Endothelial cell of umbilical vein (primary cell): ENCODE measurements at regions of chr1 and their contacts with region 1.

Region 1: GRCh38 chr1:185156854-185157598 is at the starts of genes SWT1 and TRMT1L:
- DNase-seq: peak; percentile 100
- H3K4me3 ChIP-seq: peak within 1 kb of the TSS; percentile 60 to 95 (median 92)
- H3K27ac ChIP-seq: peak within 1 kb of the TSS; percentile 85
- H3K4me1 ChIP-seq: peaks cover 19% of the 10 kb centered on the region
- H3K27me3 ChIP-seq: no peaks in the 10 kb centered on the region
- CTCF ChIP-seq: no peak
- POLR2A ChIP-seq: peak; percentile 88
- total RNA-seq, gene SWT1: 3.6 and 4.3 TPM in 2 replicates
- total RNA-seq, gene TRMT1L: 12.8 and 16.1 TPM in 2 replicates

Region 2: DNA sequence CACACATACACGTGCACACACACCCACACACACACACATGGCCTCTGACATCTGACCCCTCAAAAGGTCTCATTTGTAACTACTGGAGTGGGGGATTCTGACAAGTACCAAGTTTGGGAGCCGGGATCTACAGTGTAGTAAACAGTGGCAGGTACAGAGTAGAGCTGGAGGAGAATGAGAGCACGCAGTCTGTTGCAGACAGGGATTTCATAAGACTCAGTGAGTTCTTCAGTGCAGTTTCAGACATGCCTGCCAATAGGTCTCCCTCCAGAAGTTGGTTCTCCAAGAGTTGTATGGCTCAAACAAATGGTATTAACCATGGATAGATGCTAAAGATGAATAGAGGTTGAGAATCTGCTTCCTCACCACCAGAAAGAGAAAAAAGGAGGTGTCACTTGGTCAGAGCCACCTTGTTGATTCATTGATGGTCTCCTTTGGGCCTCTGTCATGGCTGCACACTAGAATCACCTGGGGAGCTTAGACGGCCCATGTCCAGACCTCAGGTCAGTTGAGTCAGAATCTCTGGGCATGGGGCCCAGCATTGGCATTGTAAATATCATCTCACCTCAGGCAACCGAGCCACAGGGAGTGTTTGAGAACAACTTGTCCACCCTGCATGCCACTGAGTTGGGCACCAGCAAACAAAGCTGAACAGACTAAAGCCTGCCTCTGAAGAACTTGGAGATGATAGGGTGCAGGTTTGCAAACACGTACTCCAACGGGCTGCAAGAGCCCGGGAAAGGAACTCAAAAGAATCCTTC is 524.4 kb before region 1 on chr1:
- CTCF ChIA-PET with region 1: no interaction called
- POLR2A ChIA-PET with region 1: no interaction called
- dilution Hi-C with region 1: no loop called
- intact Hi-C with region 1: no loop called
- DNase-seq: no peak
- H3K4me3 ChIP-seq: no peak overlapping the region
- H3K27ac ChIP-seq: no peak overlapping the region
- H3K4me1 ChIP-seq: no peaks in the 10 kb centered on the region
- H3K27me3 ChIP-seq: no peaks in the 10 kb centered on the region
- CTCF ChIP-seq: no peak
- POLR2A ChIP-seq: no peak

Region 3: DNA sequence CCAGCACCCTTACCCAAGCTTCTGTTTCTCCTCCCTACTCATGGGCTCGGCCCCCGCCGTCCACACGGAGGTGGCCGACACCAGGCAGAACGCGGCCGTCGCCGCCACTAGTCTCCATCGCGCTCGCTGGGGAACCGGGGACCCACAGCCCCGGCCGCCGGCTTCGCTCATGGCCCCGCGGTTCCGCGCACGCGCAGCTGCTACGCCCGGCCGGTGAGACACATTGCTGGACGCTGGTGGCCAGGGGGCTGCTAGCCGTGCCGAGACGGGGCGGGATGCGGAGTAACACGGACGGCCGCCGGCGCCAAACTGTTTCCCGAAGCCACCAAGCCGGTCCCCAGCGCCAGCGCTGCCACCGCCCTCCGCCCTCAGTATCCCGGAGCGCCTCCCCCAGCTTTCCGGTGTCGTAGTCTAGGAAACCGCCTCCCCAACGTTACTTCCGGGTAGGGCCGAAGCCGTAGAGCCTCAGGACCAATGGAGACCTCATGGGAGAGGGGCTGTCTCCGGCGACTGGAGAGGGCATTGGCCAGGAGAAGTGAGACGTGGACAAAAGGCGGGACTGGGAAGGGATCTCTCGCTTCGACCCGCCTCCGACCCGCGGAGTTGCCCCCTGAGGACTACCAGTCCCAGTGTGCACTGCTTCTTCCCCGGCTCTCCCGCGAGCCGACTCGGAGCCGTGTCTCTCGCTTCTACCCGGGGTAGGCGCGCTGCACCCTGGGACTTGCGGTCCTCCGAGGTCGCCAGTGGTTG is 402.4 kb before region 1 on chr1 and contains the start of gene EDEM3:
- CTCF ChIA-PET with region 1: interaction called, 3 read pairs
- POLR2A ChIA-PET with region 1: no interaction called
- dilution Hi-C with region 1: no loop called
- intact Hi-C with region 1: loop called (anchors 1 kb)
- DNase-seq: peak; percentile 99
- H3K4me3 ChIP-seq: peak within 1 kb of the TSS; percentile 59 to 83 (median 81)
- H3K27ac ChIP-seq: peak within 1 kb of the TSS; percentile 76
- H3K4me1 ChIP-seq: peaks cover 16% of the 10 kb centered on the region
- H3K27me3 ChIP-seq: peaks cover 0 to 3% of the 10 kb centered on the region in 2 experiments
- CTCF ChIP-seq: no peak
- POLR2A ChIP-seq: peak; percentile 93
- total RNA-seq, gene EDEM3: 26.3 and 33.5 TPM in 2 replicates

Region 4: GRCh38 chr1:184771190-184771691 is 385.8 kb before region 1 on chr1:
- CTCF ChIA-PET with region 1: no interaction called
- POLR2A ChIA-PET with region 1: no interaction called
- dilution Hi-C with region 1: no loop called
- intact Hi-C with region 1: no loop called
- DNase-seq: no peak
- H3K4me3 ChIP-seq: no peak overlapping the region
- H3K27ac ChIP-seq: no peak overlapping the region
- H3K4me1 ChIP-seq: no peaks in the 10 kb centered on the region
- H3K27me3 ChIP-seq: peaks cover 4 to 10% of the 10 kb centered on the region in 2 experiments
- CTCF ChIP-seq: no peak
- POLR2A ChIP-seq: no peak

Region 5: GRCh38 chr1:184792450-184792969 is 364.5 kb before region 1 on chr1:
- CTCF ChIA-PET with region 1: no interaction called
- POLR2A ChIA-PET with region 1: no interaction called
- dilution Hi-C with region 1: no loop called
- intact Hi-C with region 1: loop called (anchors 1 kb)
- DNase-seq: peak; percentile 90
- H3K4me3 ChIP-seq: no peak overlapping the region
- H3K27ac ChIP-seq: peak overlapping the region; percentile 96
- H3K4me1 ChIP-seq: peaks cover 22% of the 10 kb centered on the region
- H3K27me3 ChIP-seq: no peaks in the 10 kb centered on the region
- CTCF ChIP-seq: no peak
- POLR2A ChIP-seq: no peak

Region 6: DNA sequence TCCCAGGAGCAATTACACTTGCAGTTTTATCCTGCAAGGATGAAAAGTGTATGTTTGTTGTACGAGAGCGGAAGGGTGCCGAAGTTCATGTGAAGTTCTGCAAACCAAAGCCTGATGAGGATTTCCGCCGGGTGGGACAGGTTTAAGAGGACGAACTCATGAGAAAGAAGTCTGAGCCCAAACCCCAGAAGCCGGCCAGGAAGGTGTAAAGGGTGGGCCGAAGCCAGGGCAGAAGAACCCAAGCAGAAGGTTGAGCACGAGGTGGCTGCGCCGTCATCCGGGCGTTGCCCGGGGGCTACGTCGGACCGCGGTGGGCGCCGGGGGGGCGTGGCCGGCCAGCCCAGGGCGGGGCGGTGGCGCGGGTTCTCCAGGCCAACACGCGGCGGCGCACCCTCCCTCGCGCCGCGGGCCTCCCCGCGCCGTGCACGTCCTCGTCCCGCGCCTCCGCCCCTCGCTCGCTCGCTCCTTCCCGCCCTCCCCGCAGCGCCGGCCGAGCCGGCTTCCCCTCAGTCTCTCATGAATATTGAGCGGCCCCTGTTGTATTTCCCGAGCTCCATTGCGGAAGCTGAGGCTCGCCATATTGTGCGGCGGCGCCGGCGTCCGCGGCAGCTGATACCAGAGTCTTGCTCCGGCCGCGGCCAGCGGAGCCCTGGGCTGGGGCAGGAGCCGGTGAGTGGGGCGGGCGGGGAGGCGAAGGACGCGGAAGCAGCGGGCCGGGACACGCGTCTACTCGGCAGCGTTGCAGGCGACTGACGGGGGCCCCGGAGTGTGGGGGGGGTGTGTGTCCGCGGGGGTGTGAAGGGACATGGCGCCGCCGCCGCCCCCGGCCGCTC is 111.8 kb before region 1 on chr1 and contains the start of gene RNF2:
- CTCF ChIA-PET with region 1: no interaction called
- POLR2A ChIA-PET with region 1: interaction called, 3 read pairs
- dilution Hi-C with region 1: no loop called
- intact Hi-C with region 1: loop called (anchors 1 kb)
- DNase-seq: peak; percentile 86
- H3K4me3 ChIP-seq: peak within 1 kb of the TSS; percentile 71 to 96 (median 74)
- H3K27ac ChIP-seq: peak within 1 kb of the TSS; percentile 9
- H3K4me1 ChIP-seq: peaks cover 12% of the 10 kb centered on the region
- H3K27me3 ChIP-seq: no peaks in the 10 kb centered on the region
- CTCF ChIP-seq: no peak
- POLR2A ChIP-seq: peak; percentile 59
- total RNA-seq, gene RNF2: 26.0 and 30.6 TPM in 2 replicates

Region 7: DNA sequence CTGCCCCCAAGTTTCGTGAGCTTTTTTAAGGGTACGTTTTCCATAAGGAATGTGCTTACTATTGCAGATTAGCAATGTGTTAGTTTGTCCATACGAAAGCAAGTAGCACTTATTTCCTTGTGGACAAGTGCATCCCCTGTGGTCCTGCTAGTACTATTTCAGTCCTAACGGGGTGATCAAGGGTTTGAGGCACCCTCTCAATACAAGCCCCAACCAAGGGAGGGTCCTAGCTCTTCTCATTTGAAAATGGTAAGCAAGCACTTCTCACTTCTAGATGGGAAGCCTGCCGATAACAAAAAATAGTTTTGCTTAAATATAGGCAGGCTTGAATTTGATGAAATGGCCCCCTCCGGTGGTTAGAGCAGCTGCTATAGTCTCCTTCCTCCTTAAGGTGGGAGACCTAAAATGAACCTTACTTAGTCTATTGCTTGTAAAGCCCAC is 513.2 kb after region 1 on chr1:
- CTCF ChIA-PET with region 1: no interaction called
- POLR2A ChIA-PET with region 1: no interaction called
- dilution Hi-C with region 1: no loop called
- intact Hi-C with region 1: loop called (anchors 5 kb)
- DNase-seq: peak; percentile 74
- H3K4me3 ChIP-seq: no peak overlapping the region
- H3K27ac ChIP-seq: no peak overlapping the region
- H3K4me1 ChIP-seq: peaks cover 17% of the 10 kb centered on the region
- H3K27me3 ChIP-seq: no peaks in the 10 kb centered on the region
- CTCF ChIP-seq: peak; percentile 44 to 57
- POLR2A ChIP-seq: no peak